Prostate gland (tissue), 2 donors: ENCODE measurements at regions of chr15 and their contacts with region 1.

Region 1: DNA sequence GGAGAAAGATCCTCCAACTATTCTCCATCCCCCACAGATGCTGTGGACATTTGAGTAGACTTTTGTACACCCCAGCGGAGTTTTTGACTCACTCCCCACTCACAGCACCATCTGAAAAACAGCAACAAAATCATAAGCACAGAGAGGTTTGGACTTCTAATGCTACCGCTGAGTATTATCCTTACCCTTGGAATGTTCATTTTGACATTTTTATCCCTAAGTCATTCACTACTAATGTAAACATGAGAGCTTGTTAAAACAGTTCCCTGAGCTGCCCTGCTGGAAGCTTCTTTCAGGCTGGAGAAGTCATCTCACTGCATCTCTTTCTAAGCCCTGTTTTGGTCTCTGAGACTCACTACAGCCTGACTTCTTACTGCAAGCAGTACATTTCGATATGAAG is 1045.9 kb downstream of the MCTP2 start:
- DNase-seq: no peak
- H3K4me3 ChIP-seq: no peak overlapping the region
- H3K27ac ChIP-seq: peak overlapping the region; percentile 50 to 52
- H3K4me1 ChIP-seq: no peaks in the 10 kb centered on the region
- H3K27me3 ChIP-seq: no peaks in the 10 kb centered on the region
- CTCF ChIP-seq: no peak
- POLR2A ChIP-seq: no peak

Region 2: GRCh38 chr15:95417761-95418160 is 140.5 kb after region 1 on chr15:
- intact Hi-C with region 1: loop called (anchors 5 kb)
- DNase-seq: no peak
- H3K4me3 ChIP-seq: no peak overlapping the region
- H3K27ac ChIP-seq: no peak overlapping the region
- H3K4me1 ChIP-seq: no peaks in the 10 kb centered on the region
- H3K27me3 ChIP-seq: no peaks in the 10 kb centered on the region
- CTCF ChIP-seq: no peak
- POLR2A ChIP-seq: no peak

Region 3: GRCh38 chr15:95620934-95621579 is 343.8 kb after region 1 on chr15:
- intact Hi-C with region 1: no loop called
- DNase-seq: no peak
- H3K4me3 ChIP-seq: no peak overlapping the region
- H3K27ac ChIP-seq: no peak overlapping the region
- H3K4me1 ChIP-seq: no peaks in the 10 kb centered on the region
- H3K27me3 ChIP-seq: no peaks in the 10 kb centered on the region
- CTCF ChIP-seq: no peak
- POLR2A ChIP-seq: no peak